ENCODE measurements at regions of chr5 and their contacts with region 1.

Region 1: DNA sequence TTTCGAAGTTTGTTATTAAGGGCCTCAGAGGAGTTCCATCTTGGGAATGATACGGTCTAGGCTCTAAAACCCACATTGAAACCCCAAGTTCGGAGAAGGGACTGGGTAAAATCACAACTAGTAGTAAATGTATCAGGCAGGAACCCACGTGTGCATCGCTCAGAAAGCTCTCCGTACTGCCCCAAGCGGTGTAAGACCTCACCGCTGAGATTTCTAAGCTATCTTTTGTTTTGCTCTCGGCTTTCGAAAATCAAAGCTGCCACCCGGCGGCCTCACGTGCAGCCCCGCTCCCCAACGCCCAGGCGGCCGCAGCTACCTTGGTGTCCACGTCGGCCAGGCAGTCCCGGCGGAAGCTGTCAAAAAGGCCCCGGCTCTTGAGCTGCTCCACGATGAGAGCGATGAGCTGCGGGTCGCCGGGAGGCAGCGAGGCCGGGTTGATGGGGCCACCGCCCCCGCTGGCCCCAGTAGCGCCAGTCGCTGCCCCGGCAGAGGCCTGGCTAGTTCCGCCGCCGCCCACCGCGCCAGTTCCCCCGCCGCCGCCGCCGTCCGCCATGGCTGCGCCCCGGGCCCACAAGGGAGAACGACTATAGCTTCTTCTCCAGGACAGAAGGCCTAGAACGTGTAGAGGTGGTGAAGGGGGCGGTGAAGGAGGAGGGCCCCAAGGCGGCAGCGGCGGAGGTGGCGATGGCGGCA is 420 bp downstream of the BOD1 start:
- DNase-seq: peak; percentile 83
- H3K4me3 ChIP-seq: peak overlapping the region; percentile 95 to 99
- H3K27ac ChIP-seq: peak overlapping the region; percentile 96 to 97
- H3K4me1 ChIP-seq: peaks cover 29% of the 10 kb centered on the region
- H3K27me3 ChIP-seq: no peaks in the 10 kb centered on the region
- CTCF ChIP-seq: peak; percentile 48 to 69 (median 49)
- POLR2A ChIP-seq: no peak

Region 2: GRCh38 chr5:173972925-173973615 is 357.0 kb after region 1 on chr5:
- intact Hi-C with region 1: loop called (anchors 5 kb)
- DNase-seq: peak; percentile 94
- H3K4me3 ChIP-seq: peak overlapping the region; percentile 32 to 57
- H3K27ac ChIP-seq: no peak overlapping the region
- H3K4me1 ChIP-seq: no peaks in the 10 kb centered on the region
- H3K27me3 ChIP-seq: no peaks in the 10 kb centered on the region
- CTCF ChIP-seq: peak; percentile 83 to 95 (median 94)
- POLR2A ChIP-seq: no peak

Measured in testis (tissue), 5 donors.